IMR-90 (cell line): ENCODE measurements at regions of chr9 and their contacts with region 1.

Region 1: DNA sequence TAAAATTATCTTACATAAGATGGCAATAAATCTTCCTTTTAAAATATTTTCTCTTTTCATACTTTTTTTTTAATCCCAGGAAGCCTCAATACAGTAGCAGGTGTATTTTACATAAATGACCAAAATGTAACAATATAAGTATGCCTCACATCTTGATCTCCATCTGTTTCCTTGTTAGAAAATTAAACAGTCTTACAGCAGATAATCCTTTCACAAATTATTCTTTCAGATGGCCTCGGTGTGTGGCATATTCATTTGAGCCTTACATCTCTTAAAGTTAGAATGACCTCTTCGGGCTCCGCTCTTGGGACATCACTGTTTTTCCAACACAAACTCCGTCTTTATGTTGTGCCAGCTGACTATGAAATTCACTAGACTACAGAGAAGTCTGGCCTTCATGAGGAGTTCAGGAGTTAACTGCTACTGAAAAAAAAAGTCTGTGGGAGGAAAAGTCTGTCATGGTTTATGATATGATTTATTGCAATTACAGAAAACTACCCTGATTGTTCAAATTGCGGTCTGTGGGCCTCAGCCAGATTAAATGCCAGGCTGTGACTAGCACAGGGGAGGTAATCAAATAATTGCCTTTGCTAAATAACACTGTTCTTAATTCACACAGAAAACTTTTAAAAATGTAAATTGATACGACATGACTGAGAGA is 292.9 kb upstream of the PUM3 start:
- DNase-seq: no peak
- ATAC-seq: no peak
- H3K4me3 ChIP-seq: no peak overlapping the region
- H3K27ac ChIP-seq: no peak overlapping the region
- H3K4me1 ChIP-seq: no peaks in the 10 kb centered on the region
- H3K27me3 ChIP-seq: no peaks in the 10 kb centered on the region
- CTCF ChIP-seq: no peak
- POLR2A ChIP-seq: no peak
- RAD21 ChIP-seq: no peak

Region 2: GRCh38 chr9:3191715-3192114 is 54.9 kb after region 1 on chr9:
- CTCF ChIA-PET with region 1: no interaction called
- POLR2A ChIA-PET with region 1: no interaction called
- dilution Hi-C with region 1: no loop called
- in situ Hi-C with region 1: no loop called
- intact Hi-C with region 1: loop called (anchors 10 kb)
- DNase-seq: no peak
- ATAC-seq: no peak
- H3K4me3 ChIP-seq: no peak overlapping the region
- H3K27ac ChIP-seq: no peak overlapping the region
- H3K4me1 ChIP-seq: no peaks in the 10 kb centered on the region
- H3K27me3 ChIP-seq: peaks cover 5% of the 10 kb centered on the region; the same call in 1 of the 2 replicates
- CTCF ChIP-seq: no peak
- POLR2A ChIP-seq: no peak
- RAD21 ChIP-seq: no peak